Heart left ventricle (tissue), 16 donors: ENCODE measurements at regions of chr17 and their contacts with region 1.

Region 1: DNA sequence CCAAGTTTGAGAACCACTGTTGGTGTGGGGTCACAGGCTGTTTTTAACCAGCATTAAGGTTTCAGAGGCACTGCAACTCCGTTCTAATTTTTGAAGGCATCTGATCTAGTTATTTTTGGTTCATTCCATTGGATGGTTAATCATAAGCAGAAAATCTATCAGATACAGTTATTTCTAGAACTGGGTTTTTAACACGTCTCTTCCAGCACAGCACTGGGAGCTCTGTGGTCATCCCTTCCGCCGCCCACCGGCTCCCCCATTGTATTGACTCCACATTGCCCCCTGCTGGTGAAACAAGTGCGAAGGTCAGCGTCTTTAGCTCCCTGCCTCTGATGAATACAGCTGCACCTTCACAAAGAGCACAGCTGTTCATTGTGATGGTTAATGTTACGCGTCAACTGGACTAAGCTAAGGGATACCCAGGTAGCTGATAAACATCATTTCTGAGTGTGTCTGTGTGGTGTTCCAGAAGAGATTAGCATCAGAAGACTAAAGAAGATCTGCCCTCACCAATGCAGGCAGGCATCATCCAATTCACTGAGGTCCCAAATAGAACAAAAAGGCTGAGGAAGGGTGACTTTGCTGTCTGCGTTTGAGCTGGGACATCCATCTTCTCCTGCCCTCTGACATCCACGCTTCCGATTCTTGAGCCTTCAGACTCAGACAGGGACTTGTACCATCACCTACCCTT is 8.5 kb downstream of the CCL18 start:
- DNase-seq: peak in 3 of 5 donors; percentile 44 to 69 (median 46)
- ATAC-seq: peak in 3 of 4 donors; percentile 34 to 45 (median 41)
- H3K4me3 ChIP-seq: no peak overlapping the region
- H3K27ac ChIP-seq: peak overlapping the region in 1 of 12 donors; percentile 9
- H3K4me1 ChIP-seq: no peaks in the 10 kb centered on the region
- H3K27me3 ChIP-seq: peaks cover 0 to 3% (median 0%) of the 10 kb centered on the region in 9 donors
- CTCF ChIP-seq: peak; percentile 41 to 80 (median 60)
- POLR2A ChIP-seq: no peak

Region 2: GRCh38 chr17:35969558-35970380 is 102.8 kb before region 1 on chr17:
- intact Hi-C with region 1: loop called in 9 of 10 experiments (anchors 1 to 5 kb)
- DNase-seq: peak in 4 of 5 donors; percentile 63 to 78 (median 69)
- ATAC-seq: peak; percentile 67 to 81 (median 75)
- H3K4me3 ChIP-seq: no peak overlapping the region
- H3K27ac ChIP-seq: no peak overlapping the region
- H3K4me1 ChIP-seq: peaks cover 0 to 22% (median 11%) of the 10 kb centered on the region in 12 donors
- H3K27me3 ChIP-seq: no peaks in the 10 kb centered on the region
- CTCF ChIP-seq: peak; percentile 72 to 94 (median 84)
- POLR2A ChIP-seq: no peak

Region 3: DNA sequence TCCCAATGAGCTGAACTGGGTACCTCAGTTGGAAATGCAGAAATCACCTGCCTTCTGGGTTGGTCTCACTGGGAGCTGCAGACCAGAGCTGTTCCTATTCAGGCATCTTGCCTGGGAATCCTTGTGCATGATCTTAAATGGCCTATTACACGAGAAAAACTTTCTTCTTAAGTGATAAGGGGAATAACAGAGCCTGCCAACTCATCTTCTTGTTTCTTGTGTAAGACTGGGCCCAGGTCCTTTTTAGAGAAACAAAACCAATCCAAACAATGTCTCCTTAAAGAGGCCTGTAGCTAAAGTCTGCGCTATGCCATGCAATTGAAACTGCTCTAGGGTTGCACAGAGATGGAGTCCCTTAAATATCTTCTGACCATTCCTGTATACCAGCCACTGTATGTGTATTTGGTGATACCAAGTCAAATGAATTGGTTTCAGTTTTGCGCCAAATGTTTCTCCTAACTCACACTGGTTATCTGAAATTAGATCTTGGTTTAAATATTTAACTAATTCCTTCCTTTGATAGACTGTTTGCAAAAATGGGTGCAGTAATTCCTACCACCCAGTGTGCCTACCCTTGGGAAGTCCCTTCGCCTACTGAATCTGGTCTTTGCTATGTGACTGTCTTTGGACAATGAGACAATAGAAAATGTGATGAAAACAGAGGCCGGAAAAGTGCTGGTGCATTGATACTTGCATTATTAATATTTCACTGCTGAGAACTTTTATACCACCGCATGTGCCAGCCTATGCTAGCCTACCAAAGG is 48.3 kb before region 1 on chr17:
- intact Hi-C with region 1: loop called in 1 of 10 experiments (anchors 5 kb)
- DNase-seq: no peak
- ATAC-seq: no peak
- H3K4me3 ChIP-seq: no peak overlapping the region
- H3K27ac ChIP-seq: no peak overlapping the region
- H3K4me1 ChIP-seq: no peaks in the 10 kb centered on the region
- H3K27me3 ChIP-seq: peaks cover 0 to 16% (median 0%) of the 10 kb centered on the region in 9 donors
- CTCF ChIP-seq: no peak
- POLR2A ChIP-seq: no peak